PC-3 (cell line): ENCODE measurements at regions of chr7 and their contacts with region 1.

Region 1: GRCh38 chr7:81499262-81500116 is 270.4 kb downstream of the HGF start:
- DNase-seq: peak; percentile 84
- ATAC-seq: peak; percentile 74
- H3K4me3 ChIP-seq: peak overlapping the region; percentile 38; the same call in 1 of the 2 replicates
- H3K27ac ChIP-seq: peak overlapping the region; percentile 11
- H3K4me1 ChIP-seq: peaks cover 18% of the 10 kb centered on the region
- H3K27me3 ChIP-seq: no peaks in the 10 kb centered on the region
- CTCF ChIP-seq: peak; percentile 81

Region 2: GRCh38 chr7:81482600-81483186 is 16.8 kb before region 1 on chr7:
- CTCF ChIA-PET with region 1: interaction called, 4 read pairs
- POLR2A ChIA-PET with region 1: no interaction called
- intact Hi-C with region 1: loop called (anchors 1 kb)
- DNase-seq: peak; percentile 55
- ATAC-seq: peak; percentile 49; the same call in 1 of the 2 replicates
- H3K4me3 ChIP-seq: no peak overlapping the region
- H3K27ac ChIP-seq: no peak overlapping the region
- H3K4me1 ChIP-seq: 0 out of 2 replicates have a peak, but pooled peaks cover 4% of the 10 kb centered on the region
- H3K27me3 ChIP-seq: no peaks in the 10 kb centered on the region
- CTCF ChIP-seq: peak; percentile 70

Region 3: GRCh38 chr7:81669476-81670105 is 170.1 kb after region 1 on chr7:
- CTCF ChIA-PET with region 1: interaction called, 14 read pairs
- POLR2A ChIA-PET with region 1: no interaction called
- intact Hi-C with region 1: no loop called
- DNase-seq: no peak
- ATAC-seq: no peak
- H3K4me3 ChIP-seq: no peak overlapping the region
- H3K27ac ChIP-seq: no peak overlapping the region
- H3K4me1 ChIP-seq: no peaks in the 10 kb centered on the region; the same call in 1 of the 2 replicates
- H3K27me3 ChIP-seq: no peaks in the 10 kb centered on the region
- CTCF ChIP-seq: no peak

Region 4: GRCh38 chr7:81769891-81770727 is 270.6 kb after region 1 on chr7 and contains the start of gene HGF:
- CTCF ChIA-PET with region 1: interaction called, 29 read pairs
- POLR2A ChIA-PET with region 1: no interaction called
- intact Hi-C with region 1: loop called (anchors 1 kb)
- DNase-seq: peak; percentile 58
- ATAC-seq: peak; percentile 96
- H3K4me3 ChIP-seq: peak within 1 kb of the TSS; percentile 38; the same call in 1 of the 2 replicates
- H3K27ac ChIP-seq: no peak within 1 kb of the TSS
- H3K4me1 ChIP-seq: no peaks in the 10 kb centered on the region; the same call in 1 of the 2 replicates
- H3K27me3 ChIP-seq: no peaks in the 10 kb centered on the region
- CTCF ChIP-seq: no peak; the same call in 1 of the 2 replicates
- total RNA-seq, gene HGF: 0.15 TPM in 1 of 2 replicates, not detected in the other

Region 5: DNA sequence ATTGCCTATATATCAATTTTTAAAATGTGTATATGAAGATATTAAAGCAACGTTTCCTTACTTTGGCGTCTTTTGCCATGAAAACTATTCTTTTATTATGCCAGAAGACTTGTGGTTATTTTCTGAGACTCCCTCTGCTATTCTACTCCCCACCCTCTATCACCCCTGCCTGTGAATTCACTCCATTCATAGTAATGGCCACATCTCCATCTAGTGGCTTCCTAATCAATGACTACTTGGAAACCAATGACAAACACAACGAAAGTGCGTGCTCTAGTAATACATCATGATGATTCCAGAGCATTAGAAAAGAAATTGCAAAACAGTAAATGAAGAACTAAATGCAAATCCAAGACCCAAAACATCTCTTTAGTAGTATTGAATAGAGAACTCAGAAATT is 457.0 kb after region 1 on chr7:
- CTCF ChIA-PET with region 1: interaction called, 3 read pairs
- POLR2A ChIA-PET with region 1: no interaction called
- intact Hi-C with region 1: loop called (anchors 1 kb)
- DNase-seq: peak; percentile 68
- ATAC-seq: peak; percentile 74
- H3K4me3 ChIP-seq: no peak overlapping the region
- H3K27ac ChIP-seq: no peak overlapping the region
- H3K4me1 ChIP-seq: no peaks in the 10 kb centered on the region
- H3K27me3 ChIP-seq: peaks cover 3% of the 10 kb centered on the region; the same call in 1 of the 2 replicates
- CTCF ChIP-seq: peak; percentile 81

Region 6: DNA sequence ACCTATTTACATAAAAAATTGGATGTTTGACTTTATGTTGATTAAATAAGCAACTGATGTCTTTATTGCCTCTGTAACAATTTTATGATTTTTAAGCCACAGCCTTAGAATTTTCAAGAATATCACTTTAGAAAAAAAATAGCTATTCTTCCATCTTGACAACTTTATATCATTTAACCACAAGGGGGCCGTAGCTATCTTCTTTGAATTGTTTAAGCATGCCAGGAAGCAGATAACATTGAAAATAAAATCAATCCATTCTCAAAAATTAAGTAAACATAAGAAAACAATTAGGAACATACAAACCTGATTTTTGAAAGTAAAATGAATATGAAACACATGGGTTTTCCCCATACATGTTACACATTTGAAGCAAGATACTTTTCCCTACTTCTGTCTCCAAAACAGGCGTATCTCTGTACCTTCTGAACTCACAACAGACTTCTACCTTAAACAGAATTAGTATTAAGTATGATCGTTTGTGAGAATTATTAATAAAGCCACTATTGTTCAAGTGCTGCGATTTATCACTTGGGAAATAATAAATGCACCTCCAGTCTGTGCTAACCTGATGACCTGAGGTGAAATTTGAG is 735.1 kb after region 1 on chr7:
- CTCF ChIA-PET with region 1: no interaction called
- POLR2A ChIA-PET with region 1: no interaction called
- intact Hi-C with region 1: loop called (anchors 1 kb)
- DNase-seq: peak; percentile 60
- ATAC-seq: no peak
- H3K4me3 ChIP-seq: no peak overlapping the region
- H3K27ac ChIP-seq: no peak overlapping the region
- H3K4me1 ChIP-seq: no peaks in the 10 kb centered on the region
- H3K27me3 ChIP-seq: peaks cover 37% of the 10 kb centered on the region
- CTCF ChIP-seq: peak; percentile 77

Region 7: DNA sequence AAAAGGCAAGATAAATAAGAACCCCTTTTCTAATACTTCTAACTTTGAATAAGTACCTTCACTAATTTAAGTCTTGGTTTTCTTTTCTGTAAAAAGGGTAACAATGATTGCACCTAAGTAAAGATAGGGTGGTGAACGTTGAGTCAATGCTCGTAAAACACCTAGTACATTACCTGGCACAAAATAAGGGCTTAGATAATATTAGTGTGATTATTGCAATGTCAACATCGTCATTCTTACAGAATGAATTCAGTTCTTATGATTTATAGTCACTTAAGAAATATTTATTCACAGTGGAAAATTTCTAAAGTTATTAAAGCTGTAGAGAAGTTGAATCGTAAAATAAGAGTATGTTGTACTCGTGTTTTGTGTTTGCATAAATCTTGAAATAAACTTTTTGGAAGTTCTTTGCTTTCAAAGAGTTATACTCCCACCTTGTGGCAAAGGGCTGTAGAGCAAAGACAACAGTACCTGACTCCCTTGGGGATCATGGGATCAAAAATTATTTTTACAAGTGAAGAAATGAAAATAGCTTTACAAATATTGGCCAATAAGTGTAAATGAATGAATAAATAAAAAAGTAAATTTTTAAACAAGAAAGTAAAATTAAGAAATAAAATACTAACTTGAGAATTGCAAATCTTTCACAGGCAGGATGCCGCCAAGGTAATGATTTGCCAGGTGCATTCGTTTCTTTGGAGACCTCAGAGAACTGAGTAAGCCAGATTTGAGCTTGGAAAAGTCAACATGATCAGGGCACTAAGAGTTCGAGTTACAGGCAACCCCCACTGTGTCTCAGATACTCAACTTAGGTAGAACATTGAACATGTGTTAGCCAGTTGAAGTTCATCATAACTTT is 1229.9 kb after region 1 on chr7:
- CTCF ChIA-PET with region 1: interaction called, 3 read pairs
- POLR2A ChIA-PET with region 1: no interaction called
- intact Hi-C with region 1: loop called (anchors 5 kb)
- DNase-seq: peak; percentile 76
- ATAC-seq: peak; percentile 69
- H3K4me3 ChIP-seq: no peak overlapping the region
- H3K27ac ChIP-seq: no peak overlapping the region
- H3K4me1 ChIP-seq: peaks cover 6% of the 10 kb centered on the region
- H3K27me3 ChIP-seq: no peaks in the 10 kb centered on the region
- CTCF ChIP-seq: peak; percentile 88